ENCODE measurements at regions of chr21 and their contacts with region 1.

Region 1: GRCh38 chr21:44892536-44893277 is 19.2 kb upstream of the PTTG1IP start:
- DNase-seq: peak; percentile 72 to 73 (median 72)
- ATAC-seq: peak; percentile 64 to 76 (median 76)
- H3K4me3 ChIP-seq: no peak overlapping the region
- H3K27ac ChIP-seq: no peak overlapping the region
- H3K4me1 ChIP-seq: peaks cover 0 to 7% (median 3%) of the 10 kb centered on the region in 4 donors
- H3K27me3 ChIP-seq: no peaks in the 10 kb centered on the region
- CTCF ChIP-seq: peak; percentile 81 to 92 (median 84)
- POLR2A ChIP-seq: no peak

Region 2: GRCh38 chr21:44043613-44044012 is 849.1 kb before region 1 on chr21:
- intact Hi-C with region 1: no loop called
- DNase-seq: no peak
- ATAC-seq: no peak
- H3K4me3 ChIP-seq: no peak overlapping the region
- H3K27ac ChIP-seq: no peak overlapping the region
- H3K4me1 ChIP-seq: no peaks in the 10 kb centered on the region
- H3K27me3 ChIP-seq: no peaks in the 10 kb centered on the region
- CTCF ChIP-seq: no peak
- POLR2A ChIP-seq: no peak

Region 3: DNA sequence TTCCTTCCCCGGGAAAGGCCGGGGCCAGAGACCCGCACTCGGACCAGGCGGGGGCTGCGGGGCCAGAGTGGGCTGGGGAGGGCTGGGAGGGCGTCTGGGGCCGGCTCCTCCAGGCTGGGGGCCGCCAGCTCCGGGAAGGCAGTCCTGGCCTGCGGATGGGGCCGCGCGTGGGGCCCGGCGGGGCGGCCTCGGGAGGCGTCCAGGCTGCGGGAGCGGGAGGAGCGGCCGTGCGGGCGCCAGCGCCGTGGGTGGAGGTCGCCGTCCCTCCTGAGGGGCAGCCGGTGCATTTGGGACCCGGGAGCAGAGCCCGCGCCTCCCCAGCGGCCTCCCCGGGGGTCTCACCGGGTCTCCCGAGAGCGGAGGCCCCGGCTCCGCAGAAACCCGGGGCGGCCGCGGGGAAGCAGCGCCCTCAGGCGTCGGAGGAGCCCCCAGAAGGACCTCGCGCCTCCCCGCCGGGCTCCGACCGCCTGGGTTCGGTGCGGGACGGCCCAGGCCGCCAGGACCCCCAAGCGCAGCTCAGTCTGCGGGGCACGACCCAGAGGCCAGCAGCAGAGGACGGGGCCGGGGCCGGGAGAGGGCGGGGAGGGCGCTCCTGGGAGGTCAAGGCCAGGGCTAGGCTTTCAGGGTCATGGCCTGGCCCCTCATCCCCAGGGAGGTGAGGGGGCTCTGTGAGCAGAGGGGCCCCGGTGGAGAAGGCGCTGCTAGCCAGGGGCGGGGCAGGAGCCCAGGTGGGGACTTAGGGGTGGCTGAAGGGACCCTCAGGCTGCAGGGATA is 39.9 kb after region 1 on chr21:
- intact Hi-C with region 1: loop called in 1 of 2 experiments (anchors 5 kb)
- DNase-seq: peak in 2 of 3 donors; percentile 78
- ATAC-seq: peak; percentile 63 to 78 (median 65)
- H3K4me3 ChIP-seq: peak overlapping the region; percentile 40 to 59 (median 50)
- H3K27ac ChIP-seq: peak overlapping the region in 1 of 3 donors; percentile 43
- H3K4me1 ChIP-seq: peaks cover 0 to 16% (median 9%) of the 10 kb centered on the region in 4 donors
- H3K27me3 ChIP-seq: no peaks in the 10 kb centered on the region
- CTCF ChIP-seq: peak; percentile 56 to 71 (median 62)
- POLR2A ChIP-seq: no peak

Region 4: DNA sequence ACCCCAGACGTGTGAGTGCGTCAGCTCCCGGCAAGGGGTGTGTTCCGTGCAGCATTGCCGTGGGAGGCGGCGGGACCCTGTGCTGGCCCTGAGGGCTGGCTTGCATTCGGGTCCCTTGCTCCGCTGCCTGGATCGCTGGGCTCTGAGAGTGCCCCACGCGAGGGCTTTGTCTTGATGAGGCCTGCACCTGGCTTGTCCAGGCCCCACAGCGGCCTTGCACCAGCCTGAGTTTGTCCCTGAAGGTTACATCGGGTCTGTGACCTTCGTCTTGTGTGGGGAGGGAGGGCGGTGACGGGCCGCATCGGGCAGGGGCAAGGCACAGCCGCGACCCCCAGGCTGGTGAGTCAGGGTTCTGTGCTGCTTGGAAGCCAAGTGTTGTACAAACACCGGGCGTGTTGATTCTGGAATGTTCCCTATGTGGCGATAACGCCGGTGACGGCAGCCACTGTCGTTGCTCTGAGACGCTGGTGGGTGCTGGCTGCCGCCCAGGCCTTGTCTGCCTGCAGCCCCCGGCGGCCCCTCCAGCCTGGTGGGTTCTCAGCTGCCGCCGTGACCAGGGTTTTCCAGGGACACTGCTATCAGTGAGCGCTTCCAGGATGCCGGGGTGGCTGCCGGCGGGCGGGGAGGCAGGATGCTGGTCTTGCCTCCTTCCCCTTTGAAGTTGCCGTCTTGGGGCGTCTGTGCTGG is 90.0 kb after region 1 on chr21:
- intact Hi-C with region 1: no loop called
- DNase-seq: peak in 2 of 3 donors; percentile 43 to 57
- ATAC-seq: peak; percentile 25 to 51 (median 34)
- H3K4me3 ChIP-seq: no peak overlapping the region
- H3K27ac ChIP-seq: peak overlapping the region in 1 of 3 donors; percentile 17
- H3K4me1 ChIP-seq: no peaks in the 10 kb centered on the region
- H3K27me3 ChIP-seq: no peaks in the 10 kb centered on the region
- CTCF ChIP-seq: no peak
- POLR2A ChIP-seq: no peak